CD4-positive, alpha-beta memory T cell (primary cell): ENCODE measurements at regions of chr22 and their contacts with region 1.

Region 1: GRCh38 chr22:50525390-50526068 is at the start of gene SCO2:
- DNase-seq: peak; percentile 96 to 98 (median 98)
- H3K4me3 ChIP-seq: peak within 1 kb of the TSS; percentile 47 to 81
- H3K4me3 Mint-ChIP-seq: peak within 1 kb of the TSS; percentile 86 to 94 (median 92)
- H3K27ac ChIP-seq: peak within 1 kb of the TSS; percentile 96
- H3K27ac Mint-ChIP-seq: peak within 1 kb of the TSS; percentile 84 to 97 (median 94)
- H3K4me1 ChIP-seq: peaks cover 48% of the 10 kb centered on the region
- H3K4me1 Mint-ChIP-seq: peaks cover 14 to 39% (median 26%) of the 10 kb centered on the region in 4 donors
- H3K27me3 ChIP-seq: no peaks in the 10 kb centered on the region
- H3K27me3 Mint-ChIP-seq: no peaks in the 10 kb centered on the region
- total RNA-seq, gene SCO2: not detected

Region 2: GRCh38 chr22:49867303-49868265 is 657.9 kb before region 1 on chr22:
- CTCF ChIA-PET with region 1: no interaction called
- POLR2A ChIA-PET with region 1: no interaction called
- intact Hi-C with region 1: no loop called
- DNase-seq: peak; percentile 64 to 78 (median 69)
- H3K4me3 ChIP-seq: no peak overlapping the region
- H3K4me3 Mint-ChIP-seq: peak overlapping the region in 7 of 8 donors; percentile 52 to 79 (median 68)
- H3K27ac ChIP-seq: peak overlapping the region; percentile 24
- H3K27ac Mint-ChIP-seq: peak overlapping the region; percentile 83 to 96 (median 88)
- H3K4me1 ChIP-seq: peaks cover 57% of the 10 kb centered on the region
- H3K4me1 Mint-ChIP-seq: peaks cover 55 to 77% (median 62%) of the 10 kb centered on the region in 4 donors
- H3K27me3 ChIP-seq: no peaks in the 10 kb centered on the region
- H3K27me3 Mint-ChIP-seq: no peaks in the 10 kb centered on the region

Region 3: DNA sequence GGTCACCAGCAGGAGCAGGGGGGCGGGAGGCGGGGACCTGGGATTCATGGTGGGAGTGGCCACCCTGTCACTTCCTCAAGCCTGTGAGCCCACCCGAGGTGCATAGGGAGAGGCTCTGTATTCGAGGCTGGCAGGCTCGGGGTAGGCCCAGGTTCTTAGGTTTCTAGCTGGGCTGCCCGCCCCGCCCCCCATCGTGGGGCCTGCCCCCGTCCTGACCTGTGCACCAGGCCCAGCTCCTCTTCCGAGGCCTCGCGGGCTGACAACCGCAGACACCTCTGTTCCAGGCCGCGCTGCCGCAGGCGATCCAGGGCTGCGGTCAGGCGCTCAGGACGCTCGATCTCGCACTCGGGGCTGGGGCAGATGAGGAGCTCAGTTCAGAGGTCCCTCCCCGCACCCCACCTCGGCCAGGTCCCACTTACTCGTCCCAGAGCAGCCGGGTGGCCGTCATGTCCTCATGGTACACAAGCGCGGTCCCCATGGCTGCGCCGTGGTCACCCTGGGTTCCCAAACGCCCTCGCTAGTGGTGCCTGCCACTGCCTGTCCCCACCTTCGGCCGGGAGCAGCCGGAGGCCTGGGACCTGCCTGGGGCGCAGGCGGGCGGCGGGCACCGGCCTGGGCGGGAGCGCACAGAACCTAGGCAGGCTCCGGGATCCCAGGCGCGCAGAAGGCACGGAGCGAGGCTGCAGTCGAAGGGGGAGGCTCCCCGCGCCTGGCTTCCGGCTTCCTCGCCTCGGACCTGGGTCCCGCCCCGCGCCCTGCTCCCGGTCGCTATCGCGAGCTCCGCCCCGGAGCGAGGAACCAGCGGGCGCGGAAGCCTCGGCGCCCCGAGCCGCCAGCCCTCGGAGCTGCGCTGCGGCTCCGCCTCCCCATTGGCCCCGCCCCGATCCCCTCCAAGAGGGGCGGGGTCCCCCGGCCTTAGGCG is 274.7 kb before region 1 on chr22 and contains the start of gene HDAC10:
- CTCF ChIA-PET with region 1: interaction called, 18 read pairs
- POLR2A ChIA-PET with region 1: interaction called, 20 read pairs
- intact Hi-C with region 1: no loop called
- DNase-seq: peak; percentile 71 to 78 (median 74)
- H3K4me3 ChIP-seq: peak within 1 kb of the TSS; percentile 36 to 89
- H3K4me3 Mint-ChIP-seq: peak within 1 kb of the TSS; percentile 73 to 84 (median 78)
- H3K27ac ChIP-seq: peak within 1 kb of the TSS; percentile 66
- H3K27ac Mint-ChIP-seq: peak within 1 kb of the TSS in 6 of 7 donors; percentile 50 to 88 (median 64)
- H3K4me1 ChIP-seq: peaks cover 44% of the 10 kb centered on the region
- H3K4me1 Mint-ChIP-seq: peaks cover 7 to 29% (median 17%) of the 10 kb centered on the region in 4 donors
- H3K27me3 ChIP-seq: no peaks in the 10 kb centered on the region
- H3K27me3 Mint-ChIP-seq: peaks cover 1 to 2% of the 10 kb centered on the region in 2 donors
- total RNA-seq, gene HDAC10: 141 to 151 TPM

Region 4: GRCh38 chr22:50469377-50470305 is 55.9 kb before region 1 on chr22:
- CTCF ChIA-PET with region 1: interaction called, 29 read pairs
- POLR2A ChIA-PET with region 1: interaction called, 55 read pairs
- intact Hi-C with region 1: loop called (anchors 2 kb)
- DNase-seq: peak; percentile 96 to 99 (median 97)
- H3K4me3 ChIP-seq: peak overlapping the region; percentile 42 to 51
- H3K4me3 Mint-ChIP-seq: peak overlapping the region; percentile 74 to 88 (median 84)
- H3K27ac ChIP-seq: peak overlapping the region; percentile 75
- H3K27ac Mint-ChIP-seq: peak overlapping the region; percentile 89 to 98 (median 96)
- H3K4me1 ChIP-seq: peaks cover 58% of the 10 kb centered on the region
- H3K4me1 Mint-ChIP-seq: peaks cover 35 to 69% (median 51%) of the 10 kb centered on the region in 4 donors
- H3K27me3 ChIP-seq: no peaks in the 10 kb centered on the region
- H3K27me3 Mint-ChIP-seq: no peaks in the 10 kb centered on the region

Region 5: DNA sequence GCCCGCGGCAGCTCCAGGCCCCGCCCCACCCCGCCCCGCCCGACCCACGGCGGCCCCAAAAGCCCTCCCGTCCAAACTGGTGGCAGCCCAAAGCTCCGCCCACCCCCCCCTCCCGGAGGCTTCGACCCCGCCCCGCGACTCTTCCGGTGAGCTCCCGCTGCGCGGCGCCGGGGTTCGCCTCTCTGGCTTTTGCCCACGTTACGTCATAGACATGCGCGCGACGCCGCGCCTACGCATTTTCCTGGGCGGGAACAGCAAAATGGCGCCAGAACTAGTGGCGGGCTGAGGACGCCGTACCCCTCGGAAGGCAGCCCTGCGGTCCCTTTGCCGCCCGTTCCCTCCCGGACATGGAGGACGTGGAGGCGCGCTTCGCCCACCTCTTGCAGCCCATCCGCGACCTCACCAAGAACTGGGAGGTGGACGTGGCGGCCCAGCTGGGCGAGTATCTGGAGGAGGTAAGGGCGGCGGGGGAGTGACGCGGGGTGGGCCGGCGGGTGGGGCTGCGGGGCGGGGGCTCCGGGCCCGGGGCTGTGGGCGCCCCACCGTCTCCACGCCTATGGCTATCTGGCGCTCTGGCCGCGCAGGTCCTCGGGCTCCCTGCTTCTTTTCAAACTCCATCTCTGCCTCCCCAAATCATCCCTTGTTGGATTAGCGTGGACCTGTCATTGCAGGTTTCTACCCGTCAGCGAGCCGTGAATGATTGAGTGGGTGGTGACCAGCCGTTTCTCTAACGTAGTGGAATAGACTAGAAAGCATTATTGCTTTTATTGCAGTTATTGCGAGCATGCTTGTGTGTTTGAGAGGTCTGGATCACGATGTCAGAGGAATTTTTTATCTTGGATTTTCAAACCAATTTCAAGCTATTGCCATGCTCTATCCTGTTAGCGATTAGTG is 17.3 kb before region 1 on chr22 and contains the start of gene NCAPH2:
- CTCF ChIA-PET with region 1: interaction called, 76 read pairs
- POLR2A ChIA-PET with region 1: interaction called, 242 read pairs
- intact Hi-C with region 1: loop called (anchors 1 kb)
- DNase-seq: peak; percentile 96 to 97 (median 97)
- H3K4me3 ChIP-seq: peak within 1 kb of the TSS; percentile 84 to 98
- H3K4me3 Mint-ChIP-seq: peak within 1 kb of the TSS; percentile 92 to 98 (median 94)
- H3K27ac ChIP-seq: peak within 1 kb of the TSS; percentile 98
- H3K27ac Mint-ChIP-seq: peak within 1 kb of the TSS; percentile 90 to 99 (median 98)
- H3K4me1 ChIP-seq: peaks cover 28% of the 10 kb centered on the region
- H3K4me1 Mint-ChIP-seq: peaks cover 10 to 26% (median 19%) of the 10 kb centered on the region in 4 donors
- H3K27me3 ChIP-seq: no peaks in the 10 kb centered on the region
- H3K27me3 Mint-ChIP-seq: no peaks in the 10 kb centered on the region
- total RNA-seq, gene NCAPH2: 81.1 to 81.8 TPM

Region 6: DNA sequence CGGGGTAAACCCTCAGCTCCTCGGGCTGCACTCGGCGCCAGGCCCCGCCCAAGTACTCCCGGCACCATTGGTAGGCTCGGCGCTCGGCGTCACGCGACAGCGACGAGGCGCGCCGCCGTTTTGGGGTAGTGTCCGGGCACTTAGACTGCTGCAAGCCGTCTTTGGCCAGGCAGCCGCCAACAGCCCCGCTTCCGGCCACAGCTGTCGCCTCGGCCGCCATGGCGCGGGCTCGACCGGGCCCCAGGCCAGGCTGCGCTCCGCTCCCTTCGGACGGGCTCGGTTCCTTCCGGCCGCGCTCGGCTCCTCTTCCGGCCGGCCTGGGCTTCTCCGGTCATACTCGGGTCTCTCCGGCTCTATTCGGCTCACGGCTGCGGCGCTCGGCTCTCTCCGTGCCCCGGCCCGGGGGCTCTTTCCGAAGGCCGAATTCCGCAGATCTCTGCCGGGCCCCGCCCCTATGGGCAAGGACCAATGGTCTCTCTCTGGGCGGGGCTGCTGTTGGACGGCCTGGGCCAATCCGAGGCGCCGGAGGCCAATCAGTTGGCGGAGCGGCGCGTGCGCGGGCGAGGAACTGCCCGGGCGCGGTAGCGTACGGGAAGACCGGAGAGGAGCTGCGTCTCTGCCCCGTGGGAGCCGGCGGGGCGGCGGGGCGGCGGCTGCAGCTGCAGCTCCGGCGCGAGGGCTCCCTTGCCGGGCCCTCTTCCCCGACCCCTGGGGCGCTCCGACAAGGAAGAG is 57.2 kb after region 1 on chr22 and contains the start of gene CHKB:
- CTCF ChIA-PET with region 1: interaction called, 4 read pairs
- POLR2A ChIA-PET with region 1: interaction called, 39 read pairs
- intact Hi-C with region 1: loop called (anchors 1 kb)
- DNase-seq: peak; percentile 98 to 99 (median 98)
- H3K4me3 ChIP-seq: peak within 1 kb of the TSS; percentile 63 to 91
- H3K4me3 Mint-ChIP-seq: peak within 1 kb of the TSS; percentile 90 to 96 (median 93)
- H3K27ac ChIP-seq: peak within 1 kb of the TSS; percentile 97
- H3K27ac Mint-ChIP-seq: peak within 1 kb of the TSS; percentile 91 to 98 (median 96)
- H3K4me1 ChIP-seq: peaks cover 21% of the 10 kb centered on the region
- H3K4me1 Mint-ChIP-seq: peaks cover 8 to 39% (median 16%) of the 10 kb centered on the region in 4 donors
- H3K27me3 ChIP-seq: no peaks in the 10 kb centered on the region
- H3K27me3 Mint-ChIP-seq: no peaks in the 10 kb centered on the region
- total RNA-seq, gene CHKB: 178 to 196 TPM

Region 7: DNA sequence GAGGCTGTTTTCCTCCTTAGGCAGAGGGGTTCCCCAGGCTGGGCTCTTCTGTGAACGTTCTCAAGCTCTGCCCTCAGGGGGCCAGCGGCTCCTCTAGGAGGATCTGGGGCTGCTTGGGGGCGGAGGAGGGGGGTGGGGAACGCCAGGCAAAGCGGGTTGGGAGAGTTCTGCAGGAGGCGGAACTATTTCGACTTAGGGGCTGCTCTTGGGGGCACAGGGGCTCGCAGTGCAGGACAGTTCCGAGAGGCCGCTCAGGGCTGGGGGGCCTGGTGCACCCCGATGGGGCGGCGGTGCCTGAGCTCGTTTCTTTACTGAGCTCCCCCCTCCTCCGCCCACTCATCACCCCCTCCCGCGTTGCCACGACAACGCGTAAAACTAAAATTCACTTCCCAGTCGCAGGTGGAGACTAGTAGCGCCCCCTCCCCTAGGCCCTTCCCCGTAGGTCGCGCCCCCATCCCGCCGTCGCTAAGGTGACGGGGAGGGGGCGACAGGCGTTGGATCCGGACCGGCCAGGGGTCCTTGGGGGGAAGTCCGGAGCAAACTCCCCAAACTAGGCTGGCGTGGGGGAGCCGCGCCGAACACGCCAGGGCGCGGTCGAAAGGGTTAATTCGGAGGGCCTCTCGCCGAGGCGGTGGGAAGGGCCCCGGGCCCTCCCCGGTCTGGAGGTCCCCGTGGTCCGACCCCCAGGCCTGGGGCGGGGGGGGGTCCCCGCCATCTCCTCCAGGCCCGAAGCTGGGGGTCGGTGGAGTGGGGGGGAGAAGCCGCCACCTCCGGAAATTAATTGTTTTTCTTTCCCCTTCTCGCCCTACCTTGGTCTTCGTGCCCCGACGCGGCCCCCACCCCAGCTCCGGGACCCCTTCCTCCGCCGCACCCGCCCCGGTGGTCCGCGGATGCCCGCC is 148.0 kb after region 1 on chr22:
- CTCF ChIA-PET with region 1: no interaction called
- POLR2A ChIA-PET with region 1: no interaction called
- intact Hi-C with region 1: no loop called
- DNase-seq: peak in 3 of 5 donors; percentile 22 to 57 (median 24)
- H3K4me3 ChIP-seq: no peak overlapping the region
- H3K4me3 Mint-ChIP-seq: peak overlapping the region; percentile 42 to 74 (median 64)
- H3K27ac ChIP-seq: no peak overlapping the region
- H3K27ac Mint-ChIP-seq: peak overlapping the region in 2 of 7 donors; percentile 47 to 50
- H3K4me1 ChIP-seq: peaks cover 17% of the 10 kb centered on the region
- H3K4me1 Mint-ChIP-seq: peaks cover 5 to 32% (median 13%) of the 10 kb centered on the region in 4 donors
- H3K27me3 ChIP-seq: peaks cover 25% of the 10 kb centered on the region
- H3K27me3 Mint-ChIP-seq: peaks cover 23 to 37% of the 10 kb centered on the region in 2 donors